ENCODE measurements at regions of chr16 and their contacts with region 1.

Region 1: DNA sequence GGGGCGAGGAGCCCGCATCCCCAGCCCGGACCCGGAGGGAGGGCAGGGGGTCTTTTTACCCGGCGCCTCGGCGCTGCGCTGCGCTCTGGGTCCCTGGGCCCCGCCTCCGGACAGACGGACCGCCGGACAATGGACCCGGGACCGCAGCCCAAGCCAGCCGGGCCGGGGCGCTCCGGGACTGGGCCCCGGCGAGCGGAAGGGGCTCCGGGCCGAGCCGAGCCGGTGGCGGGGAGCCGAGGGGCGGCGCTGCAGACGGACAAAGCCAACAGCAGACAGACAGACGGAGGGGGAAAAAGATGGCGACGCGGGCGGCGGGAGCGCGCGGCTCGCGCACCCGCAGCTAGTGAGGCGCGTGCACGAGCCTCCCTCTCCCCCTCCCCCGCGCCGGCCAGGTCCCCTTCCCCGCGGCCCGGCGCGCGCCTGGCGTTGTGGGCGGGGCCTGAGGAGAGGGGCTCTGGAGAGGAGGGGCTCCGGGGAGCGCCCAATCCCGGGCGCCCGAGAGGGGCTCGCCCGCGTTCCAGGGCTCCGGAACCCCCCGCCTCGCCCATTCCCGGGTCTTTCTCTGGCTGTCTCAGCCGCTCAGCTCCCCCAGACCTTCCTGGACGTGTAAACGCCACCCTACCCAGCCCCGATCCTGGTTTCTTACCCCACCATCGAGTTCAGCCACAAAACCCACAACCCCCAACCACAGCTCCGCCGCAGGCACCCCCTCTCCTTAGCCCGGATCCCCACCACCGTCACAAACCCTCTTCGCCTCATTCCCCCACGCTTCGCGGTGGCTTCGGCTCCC is at the start of gene ZNF821:
- DNase-seq: peak; percentile 81 to 90 (median 82)
- ATAC-seq: peak; percentile 71 to 94 (median 90)
- H3K4me3 ChIP-seq: peak within 1 kb of the TSS; percentile 67 to 100 (median 94)
- H3K27ac ChIP-seq: peak within 1 kb of the TSS; percentile 72 to 96 (median 90)
- H3K4me1 ChIP-seq: peaks cover 0 to 45% (median 11%) of the 10 kb centered on the region in 12 donors
- H3K27me3 ChIP-seq: no peaks in the 10 kb centered on the region
- CTCF ChIP-seq: peak in 11 of 12 donors; percentile 7 to 70 (median 40)
- POLR2A ChIP-seq: peak in 1 of 2 donors; percentile 46
- total RNA-seq, gene ZNF821: 2.3 to 5.7 (median 3.9) TPM

Region 2: DNA sequence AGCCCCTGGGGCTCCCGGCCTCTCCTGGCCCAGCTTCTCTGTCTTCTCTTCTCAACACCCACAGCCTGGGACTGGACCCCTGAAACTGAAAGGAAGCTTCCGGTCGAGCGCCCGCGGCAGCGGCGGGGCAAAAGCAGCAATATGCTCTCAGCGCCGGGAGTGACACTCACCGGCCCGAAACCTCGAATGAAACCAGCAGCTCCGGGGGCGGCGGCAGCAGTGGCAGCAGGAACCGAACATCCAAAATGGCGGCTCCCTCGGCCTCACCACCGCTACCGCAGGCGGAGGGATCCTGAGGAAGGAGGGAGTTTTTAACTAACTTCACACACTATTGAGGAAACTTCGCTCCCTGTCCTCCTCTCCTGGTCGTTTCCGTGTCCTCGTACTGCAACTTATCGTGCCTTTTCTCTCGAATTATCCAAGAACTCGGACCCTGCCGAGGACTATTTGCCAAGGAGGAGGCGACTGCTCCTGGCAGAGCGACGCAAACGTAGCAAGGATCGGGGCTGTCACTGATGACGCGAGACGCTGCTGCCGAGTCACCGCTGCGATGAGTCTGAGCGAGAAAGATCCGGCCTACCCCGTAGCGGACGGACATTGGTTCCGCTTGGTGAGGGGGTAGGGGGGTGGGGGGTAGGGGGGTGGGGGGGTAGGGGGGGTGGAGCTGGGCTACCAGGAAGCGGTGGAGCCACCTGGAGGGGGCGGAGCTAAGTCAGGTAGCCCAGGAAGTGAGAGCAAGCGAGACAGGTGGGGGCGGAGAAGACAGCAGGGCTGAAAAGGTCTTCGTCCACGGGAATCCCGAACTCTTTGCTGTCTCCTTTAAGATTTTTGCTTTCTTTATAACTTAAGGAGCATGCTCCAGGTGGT is 75.2 kb before region 1 on chr16 and contains the start of gene AP1G1:
- intact Hi-C with region 1: loop called in 1 of 10 experiments (anchors 10 kb)
- DNase-seq: peak; percentile 96 to 98 (median 96)
- ATAC-seq: peak; percentile 98 to 99 (median 99)
- H3K4me3 ChIP-seq: peak within 1 kb of the TSS; percentile 75 to 100 (median 88)
- H3K27ac ChIP-seq: peak within 1 kb of the TSS; percentile 91 to 100 (median 97)
- H3K4me1 ChIP-seq: peaks cover 4 to 36% (median 31%) of the 10 kb centered on the region in 12 donors
- H3K27me3 ChIP-seq: no peaks in the 10 kb centered on the region
- CTCF ChIP-seq: peak in 1 of 12 donors; percentile 19
- POLR2A ChIP-seq: peak in 1 of 2 donors; percentile 31
- total RNA-seq, gene AP1G1: 32.1 to 60.5 (median 37.1) TPM

Region 3: DNA sequence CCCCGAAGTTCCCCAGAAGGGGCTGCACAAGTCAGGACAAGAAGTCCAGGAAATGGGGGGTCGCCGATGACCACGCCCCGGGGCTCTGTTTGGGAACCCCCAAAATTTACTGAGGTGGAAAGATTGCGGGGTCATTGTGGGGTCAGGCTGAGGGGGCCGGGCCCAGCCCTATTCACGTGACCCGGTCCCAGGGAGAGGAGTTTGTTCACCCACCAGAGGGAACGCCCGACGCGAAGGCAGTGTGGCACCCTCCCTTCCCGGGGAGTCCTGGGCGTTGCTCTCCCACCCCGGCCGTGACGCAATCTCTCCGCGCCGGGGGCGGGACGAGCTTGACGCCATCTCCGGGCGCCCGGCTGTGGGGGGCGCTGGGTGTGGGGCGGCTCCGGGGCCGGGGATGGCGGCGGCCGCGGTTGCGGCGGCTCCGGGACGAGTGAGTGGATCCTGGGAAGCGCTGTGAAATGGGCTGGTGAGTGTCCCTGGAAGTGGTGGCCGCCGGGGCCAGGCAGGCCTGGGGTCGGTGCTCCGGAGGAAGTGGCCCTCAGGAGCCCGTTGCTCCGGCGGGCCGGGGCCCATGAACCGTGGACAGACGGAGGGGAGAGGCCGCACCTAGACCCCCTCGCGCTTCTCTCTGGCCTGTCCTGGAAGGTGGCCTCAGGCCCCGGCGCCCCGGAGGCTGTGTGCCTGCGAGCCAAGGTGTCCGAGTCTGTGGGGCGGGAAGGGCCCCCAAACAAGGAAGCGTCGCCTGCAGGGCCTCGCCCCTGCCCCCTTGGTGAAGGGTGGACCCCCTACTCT is 38.2 kb before region 1 on chr16 and contains the start of gene ATXN1L:
- intact Hi-C with region 1: loop called in 2 of 10 experiments (anchors 5 kb)
- DNase-seq: peak; percentile 91 to 95 (median 93)
- ATAC-seq: peak; percentile 95 to 98 (median 97)
- H3K4me3 ChIP-seq: peak within 1 kb of the TSS; percentile 72 to 100 (median 92)
- H3K27ac ChIP-seq: peak within 1 kb of the TSS; percentile 57 to 97 (median 90)
- H3K4me1 ChIP-seq: peaks cover 0 to 38% (median 17%) of the 10 kb centered on the region in 12 donors
- H3K27me3 ChIP-seq: no peaks in the 10 kb centered on the region
- CTCF ChIP-seq: peak in 4 of 12 donors; percentile 7 to 30 (median 22)
- POLR2A ChIP-seq: peak; percentile 45 to 85
- total RNA-seq, gene ATXN1L: 14.3 to 24.2 (median 19.8) TPM

Region 4: DNA sequence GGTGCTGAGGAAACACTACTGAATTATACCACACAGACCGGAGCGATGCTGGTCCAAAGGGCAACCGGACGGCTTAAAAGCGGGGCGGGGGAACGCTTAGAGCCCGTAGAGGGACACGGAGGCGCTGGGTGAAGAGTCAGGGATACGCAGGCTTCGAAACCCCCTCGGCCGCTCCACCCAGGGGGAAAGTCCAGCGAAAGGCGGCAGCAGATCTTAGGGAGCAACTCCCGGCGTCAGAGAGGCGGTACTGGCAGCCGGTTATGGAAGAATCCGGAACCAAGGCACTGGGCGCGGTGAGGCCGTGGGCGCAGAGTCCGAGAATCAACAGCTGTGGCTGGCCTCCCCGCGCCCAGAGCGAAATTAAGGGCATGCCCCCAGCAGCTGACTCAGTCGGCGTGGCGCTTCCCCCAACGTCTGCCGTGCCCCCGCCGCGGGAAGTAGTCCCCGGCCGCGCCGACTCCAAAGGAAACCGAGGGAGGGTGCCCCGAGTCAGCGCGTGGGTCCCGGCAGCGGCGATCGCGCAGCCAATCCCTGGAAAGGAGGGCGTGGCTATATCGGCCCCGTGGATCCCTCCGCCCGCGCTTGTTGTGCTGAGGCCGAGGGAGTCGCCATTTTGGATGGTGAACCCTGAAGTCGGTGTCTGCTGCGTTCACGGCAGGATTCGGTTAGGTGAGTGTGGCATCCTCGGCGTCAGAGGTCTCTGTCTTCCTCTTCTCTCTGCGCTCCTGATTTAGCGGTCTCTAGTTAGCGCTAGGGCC is 11.1 kb after region 1 on chr16 and contains the start of gene IST1:
- intact Hi-C with region 1: loop called in 1 of 10 experiments (anchors 1 kb)
- DNase-seq: peak; percentile 99
- ATAC-seq: peak; percentile 95 to 98 (median 98)
- H3K4me3 ChIP-seq: peak within 1 kb of the TSS; percentile 69 to 99 (median 90)
- H3K27ac ChIP-seq: peak within 1 kb of the TSS; percentile 87 to 99 (median 98)
- H3K4me1 ChIP-seq: peaks cover 4 to 45% (median 34%) of the 10 kb centered on the region in 12 donors
- H3K27me3 ChIP-seq: no peaks in the 10 kb centered on the region
- CTCF ChIP-seq: peak in 1 of 12 donors; percentile 4
- POLR2A ChIP-seq: peak; percentile 29 to 93
- total RNA-seq, gene IST1: 89.2 to 146 (median 109) TPM

Region 5: DNA sequence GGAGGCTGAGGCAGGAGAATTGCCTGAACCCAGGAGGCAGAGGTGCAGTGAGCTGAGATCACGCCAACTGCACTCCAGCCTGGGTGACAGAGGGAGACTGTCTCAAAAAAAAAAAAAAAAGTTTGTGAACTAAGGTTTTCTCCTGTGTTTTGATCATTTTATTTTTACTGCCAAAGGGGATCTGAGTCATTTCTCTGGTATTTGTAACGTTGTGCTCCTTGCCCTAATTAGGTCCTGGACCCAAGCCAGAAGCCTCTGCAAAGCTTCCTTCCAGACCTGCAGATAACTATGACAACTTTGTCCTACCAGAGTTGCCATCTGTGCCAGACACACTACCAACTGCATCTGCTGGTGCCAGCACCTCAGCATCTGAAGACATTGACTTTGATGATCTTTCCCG is 43.3 kb after region 1 on chr16:
- intact Hi-C with region 1: loop called in 3 of 10 experiments (anchors 5 kb)
- DNase-seq: peak in 4 of 5 donors; percentile 60 to 85 (median 72)
- ATAC-seq: peak; percentile 51 to 77 (median 63)
- H3K4me3 ChIP-seq: no peak overlapping the region
- H3K27ac ChIP-seq: peak overlapping the region; percentile 27 to 83 (median 69)
- H3K4me1 ChIP-seq: peaks cover 19 to 71% (median 61%) of the 10 kb centered on the region in 12 donors
- H3K27me3 ChIP-seq: no peaks in the 10 kb centered on the region
- CTCF ChIP-seq: no peak
- POLR2A ChIP-seq: no peak

Region 6: GRCh38 chr16:71933913-71934695 is 50.1 kb after region 1 on chr16:
- intact Hi-C with region 1: loop called in 3 of 10 experiments (anchors 5 kb)
- DNase-seq: no peak
- ATAC-seq: peak in 2 of 4 donors; percentile 12 to 21
- H3K4me3 ChIP-seq: no peak overlapping the region
- H3K27ac ChIP-seq: peak overlapping the region in 4 of 12 donors; percentile 6 to 24 (median 15)
- H3K4me1 ChIP-seq: peaks cover 0 to 44% (median 24%) of the 10 kb centered on the region in 12 donors
- H3K27me3 ChIP-seq: no peaks in the 10 kb centered on the region
- CTCF ChIP-seq: no peak
- POLR2A ChIP-seq: no peak

Region 7: GRCh38 chr16:71961066-71962039 is 77.3 kb after region 1 on chr16:
- intact Hi-C with region 1: loop called (anchors 1 to 5 kb)
- DNase-seq: peak; percentile 81 to 89 (median 81)
- ATAC-seq: peak; percentile 71 to 98 (median 94)
- H3K4me3 ChIP-seq: no peak overlapping the region
- H3K27ac ChIP-seq: no peak overlapping the region
- H3K4me1 ChIP-seq: peaks cover 0 to 7% (median 0%) of the 10 kb centered on the region in 12 donors
- H3K27me3 ChIP-seq: peaks cover 0 to 5% (median 0%) of the 10 kb centered on the region in 9 donors
- CTCF ChIP-seq: peak; percentile 66 to 87 (median 80)
- POLR2A ChIP-seq: no peak